ENCODE measurements at regions of chr2 and their contacts with region 1.

Region 1: GRCh38 chr2:176096986-176097819 is 2.4 kb upstream of the HOXD12 start:
- DNase-seq: peak; percentile 44 to 63
- ATAC-seq: peak; percentile 53 to 93 (median 86)
- H3K4me3 ChIP-seq: peak overlapping the region; percentile 6 to 53 (median 42)
- H3K27ac ChIP-seq: no peak overlapping the region
- H3K4me1 ChIP-seq: peaks cover 0 to 40% (median 25%) of the 10 kb centered on the region in 9 donors
- H3K27me3 ChIP-seq: peaks cover 71 to 100% (median 100%) of the 10 kb centered on the region in 7 donors
- CTCF ChIP-seq: peak; percentile 67 to 87 (median 83)

Region 2: DNA sequence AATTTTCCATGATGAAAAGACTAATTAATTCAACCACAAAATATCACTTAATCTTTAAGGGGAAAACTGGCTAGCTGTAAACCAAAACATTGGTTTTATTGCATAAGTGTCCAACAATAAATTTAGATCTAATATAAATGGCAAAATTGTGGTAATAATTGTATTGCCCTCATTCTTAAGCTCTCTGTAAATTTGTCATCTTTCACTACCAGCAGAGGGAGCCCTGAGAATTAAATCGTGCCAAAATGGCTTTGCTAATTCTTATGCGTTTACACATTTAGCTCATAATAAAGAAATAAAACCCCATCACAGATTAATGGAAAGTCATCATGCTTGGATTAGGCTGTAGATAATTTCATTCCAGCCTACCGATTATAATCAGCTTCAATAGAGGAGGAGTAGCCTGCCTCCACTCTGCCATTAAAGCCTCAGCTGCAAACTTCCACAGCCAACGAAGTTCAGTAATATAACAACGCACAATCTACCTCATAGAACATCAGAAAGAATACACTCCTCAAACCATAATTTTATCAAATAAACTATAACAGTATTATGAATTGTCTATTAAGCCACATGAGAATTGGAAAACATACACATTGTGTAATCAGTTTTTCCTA is 845.7 kb before region 1 on chr2:
- intact Hi-C with region 1: loop called in 2 of 10 experiments (anchors 5 kb)
- DNase-seq: no peak
- ATAC-seq: no peak
- H3K4me3 ChIP-seq: no peak overlapping the region
- H3K27ac ChIP-seq: no peak overlapping the region
- H3K4me1 ChIP-seq: peaks cover 0 to 4% (median 0%) of the 10 kb centered on the region in 9 donors
- H3K27me3 ChIP-seq: peaks cover 0 to 26% (median 12%) of the 10 kb centered on the region in 7 donors
- CTCF ChIP-seq: peak in 8 of 9 donors; percentile 16 to 75 (median 62)

Region 3: DNA sequence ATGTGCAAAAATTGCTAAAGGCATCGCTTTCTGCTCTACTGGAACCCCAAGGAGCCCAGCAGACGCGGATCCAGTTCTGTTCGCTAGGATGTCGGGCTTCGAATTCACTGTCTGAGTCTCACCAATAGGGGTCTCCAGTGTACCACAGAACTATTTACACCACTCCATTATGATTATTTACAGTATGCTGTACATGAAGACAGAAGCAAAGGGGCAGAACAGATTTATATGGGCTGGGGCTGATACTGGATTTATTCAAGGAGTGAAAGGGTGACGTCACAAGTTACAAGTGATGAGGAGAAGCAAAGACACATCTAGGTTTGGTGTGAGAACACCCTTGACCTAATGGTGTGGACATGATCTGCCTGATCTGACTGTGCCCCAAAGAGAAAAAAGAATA is 730.4 kb before region 1 on chr2:
- intact Hi-C with region 1: loop called in 3 of 10 experiments (anchors 2 to 5 kb)
- DNase-seq: peak in 1 of 2 donors; percentile 18
- ATAC-seq: peak in 3 of 8 donors; percentile 64 to 73 (median 67)
- H3K4me3 ChIP-seq: no peak overlapping the region
- H3K27ac ChIP-seq: no peak overlapping the region
- H3K4me1 ChIP-seq: no peaks in the 10 kb centered on the region
- H3K27me3 ChIP-seq: peaks cover 0 to 85% (median 75%) of the 10 kb centered on the region in 7 donors
- CTCF ChIP-seq: peak; percentile 50 to 84 (median 72)

Region 4: GRCh38 chr2:175414882-175415487 is 682.2 kb before region 1 on chr2:
- intact Hi-C with region 1: loop called in 1 of 10 experiments (anchors 2 kb)
- DNase-seq: peak; percentile 35 to 57
- ATAC-seq: peak in 2 of 8 donors; percentile 58 to 62
- H3K4me3 ChIP-seq: no peak overlapping the region
- H3K27ac ChIP-seq: no peak overlapping the region
- H3K4me1 ChIP-seq: peaks cover 0 to 7% (median 0%) of the 10 kb centered on the region in 9 donors
- H3K27me3 ChIP-seq: peaks cover 0 to 12% (median 0%) of the 10 kb centered on the region in 7 donors
- CTCF ChIP-seq: peak; percentile 21 to 73 (median 61)

Region 5: GRCh38 chr2:175690113-175690837 is 406.9 kb before region 1 on chr2:
- intact Hi-C with region 1: loop called in 1 of 10 experiments (anchors 5 kb)
- DNase-seq: peak in 1 of 2 donors; percentile 47
- ATAC-seq: peak in 1 of 8 donors; percentile 61
- H3K4me3 ChIP-seq: no peak overlapping the region
- H3K27ac ChIP-seq: no peak overlapping the region
- H3K4me1 ChIP-seq: no peaks in the 10 kb centered on the region
- H3K27me3 ChIP-seq: peaks cover 0 to 55% (median 34%) of the 10 kb centered on the region in 7 donors
- CTCF ChIP-seq: peak in 8 of 9 donors; percentile 55 to 87 (median 76)

Region 6: GRCh38 chr2:175892046-175892445 is 205.2 kb before region 1 on chr2:
- intact Hi-C with region 1: no loop called
- DNase-seq: no peak
- ATAC-seq: no peak
- H3K4me3 ChIP-seq: no peak overlapping the region
- H3K27ac ChIP-seq: no peak overlapping the region
- H3K4me1 ChIP-seq: no peaks in the 10 kb centered on the region
- H3K27me3 ChIP-seq: no peaks in the 10 kb centered on the region
- CTCF ChIP-seq: no peak

Measured in heart right ventricle (tissue), 16 donors.